ENCODE measurements at regions of chr22 and their contacts with region 1.

Region 1: GRCh38 chr22:33000342-33001280 is 57.6 kb downstream of the SYN3 start:
- DNase-seq: peak; percentile 39
- H3K4me3 ChIP-seq: no peak overlapping the region
- H3K27ac ChIP-seq: no peak overlapping the region
- H3K4me1 ChIP-seq: no peaks in the 10 kb centered on the region
- H3K27me3 ChIP-seq: no peaks in the 10 kb centered on the region
- CTCF ChIP-seq: peak; percentile 77 to 87 (median 87)
- POLR2A ChIP-seq: no peak

Region 2: GRCh38 chr22:33180356-33180755 is 179.7 kb after region 1 on chr22:
- intact Hi-C with region 1: no loop called
- DNase-seq: no peak
- H3K4me3 ChIP-seq: no peak overlapping the region
- H3K27ac ChIP-seq: no peak overlapping the region
- H3K4me1 ChIP-seq: no peaks in the 10 kb centered on the region
- H3K27me3 ChIP-seq: no peaks in the 10 kb centered on the region
- CTCF ChIP-seq: no peak
- POLR2A ChIP-seq: no peak

Region 3: GRCh38 chr22:33209930-33210784 is 209.5 kb after region 1 on chr22:
- intact Hi-C with region 1: loop called (anchors 10 kb)
- DNase-seq: no peak
- H3K4me3 ChIP-seq: no peak overlapping the region
- H3K27ac ChIP-seq: no peak overlapping the region
- H3K4me1 ChIP-seq: no peaks in the 10 kb centered on the region
- H3K27me3 ChIP-seq: no peaks in the 10 kb centered on the region
- CTCF ChIP-seq: peak; percentile 17 to 41 (median 19)
- POLR2A ChIP-seq: no peak